ENCODE measurements at regions of chr4 and their contacts with region 1.

Region 1: DNA sequence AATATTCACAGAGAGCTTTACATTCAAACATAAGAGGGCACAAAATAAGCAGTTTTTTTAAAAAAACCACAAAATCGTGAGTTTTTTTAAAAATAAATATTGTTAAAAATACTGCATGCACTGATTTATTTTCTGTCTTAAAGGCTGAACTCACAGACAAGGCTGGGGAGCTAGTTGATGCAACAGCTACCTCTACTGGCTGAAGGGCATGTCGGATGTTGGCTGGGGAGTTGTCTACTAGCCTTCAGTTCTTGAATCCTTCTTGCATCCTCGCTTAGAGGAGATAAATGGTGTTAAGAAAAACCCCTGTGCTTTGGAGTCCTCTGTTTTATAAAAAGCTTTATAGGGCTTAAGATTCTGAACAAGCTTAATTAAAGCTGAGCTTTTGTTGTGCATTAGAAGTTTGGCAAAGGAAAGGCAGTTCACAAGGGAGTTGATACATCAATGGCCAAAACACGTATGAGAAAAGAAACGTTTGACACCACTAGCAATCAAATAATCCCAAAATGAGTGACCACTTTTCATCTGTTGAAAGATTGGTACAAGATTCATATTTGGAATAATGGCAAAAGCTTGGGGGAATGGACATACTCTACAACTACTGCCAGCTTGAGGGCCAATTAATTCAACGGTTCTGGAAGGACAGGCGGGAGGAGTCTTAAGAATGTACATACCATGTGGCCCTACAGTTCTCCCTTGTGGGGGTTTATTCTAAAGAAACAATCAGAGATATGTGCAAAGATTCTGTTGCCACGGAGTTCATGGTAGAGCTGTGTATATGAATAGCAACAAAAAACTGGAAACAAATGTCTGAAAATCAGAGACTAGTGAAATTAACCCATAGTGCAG is 94.7 kb downstream of the SEL1L3 start:
- DNase-seq: no peak
- H3K4me3 ChIP-seq: no peak overlapping the region
- CTCF ChIP-seq: peak; percentile 93

Region 2: DNA sequence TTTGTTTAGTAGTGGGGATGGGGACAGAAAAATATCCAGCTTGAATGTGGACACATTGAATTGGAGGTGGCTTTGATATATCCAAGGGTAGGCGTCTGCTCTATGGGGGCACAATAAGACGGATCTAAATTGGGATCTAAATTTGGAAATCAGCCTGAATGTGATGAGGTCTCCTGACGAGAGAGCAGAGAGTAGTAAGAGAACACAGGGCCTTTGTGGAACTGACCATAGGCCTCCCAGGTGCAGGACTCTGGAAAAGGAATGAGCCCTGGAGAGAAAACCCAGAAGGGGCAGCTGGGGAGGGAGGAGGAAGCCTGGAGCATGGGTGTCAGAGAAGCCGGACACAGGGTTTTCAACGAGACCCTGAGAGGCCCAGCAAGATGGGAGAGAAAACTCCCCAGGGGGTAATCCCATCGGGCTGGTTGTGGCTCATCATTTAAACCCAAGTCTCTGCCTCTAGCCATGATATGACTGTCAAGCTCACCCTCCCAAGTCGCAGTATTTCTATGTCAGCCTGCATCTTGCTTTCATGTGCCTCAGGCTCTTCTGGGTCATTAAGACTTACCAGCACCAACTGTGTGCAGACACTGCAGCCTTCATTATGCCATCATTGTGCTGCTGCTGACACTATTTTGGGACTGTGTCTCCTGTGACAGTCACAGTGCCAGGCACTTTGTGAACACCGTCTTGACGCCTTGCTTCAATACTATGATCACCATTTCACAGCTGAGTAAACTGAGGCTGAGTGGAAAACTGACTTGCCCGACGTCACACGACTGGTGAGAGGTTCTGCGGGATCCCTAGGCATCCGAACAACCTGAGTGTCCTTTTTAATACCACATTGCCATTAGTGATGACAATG is 333.9 kb before region 1 on chr4:
- CTCF ChIA-PET with region 1: interaction called, 464 read pairs
- POLR2A ChIA-PET with region 1: no interaction called
- DNase-seq: no peak
- H3K4me3 ChIP-seq: no peak overlapping the region
- CTCF ChIP-seq: no peak

Region 3: DNA sequence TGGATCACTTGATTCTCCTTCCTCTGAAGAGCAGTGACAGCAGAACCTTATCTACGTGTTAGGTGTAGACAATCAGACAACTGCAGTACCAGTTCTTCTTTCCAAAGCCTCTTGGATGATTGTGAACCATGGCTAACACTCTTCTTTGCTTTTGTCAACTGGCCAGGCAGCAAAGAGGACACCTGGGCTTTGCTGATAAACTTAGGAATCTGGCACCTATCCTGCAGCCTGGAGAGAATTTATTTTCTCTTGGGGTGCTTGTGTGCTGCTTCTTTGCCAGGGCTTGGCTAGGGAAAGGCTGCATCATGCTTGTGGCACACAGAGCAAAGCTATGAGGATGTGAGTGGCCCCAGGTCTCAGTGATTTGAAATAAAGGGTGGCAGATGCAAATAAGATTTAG is 313.6 kb before region 1 on chr4:
- CTCF ChIA-PET with region 1: interaction called, 30 read pairs
- POLR2A ChIA-PET with region 1: no interaction called
- DNase-seq: no peak
- H3K4me3 ChIP-seq: no peak overlapping the region
- CTCF ChIP-seq: no peak

Region 4: GRCh38 chr4:25756503-25756902 is 11.6 kb before region 1 on chr4:
- CTCF ChIA-PET with region 1: interaction called, 27 read pairs
- POLR2A ChIA-PET with region 1: no interaction called
- DNase-seq: no peak
- H3K4me3 ChIP-seq: no peak overlapping the region
- CTCF ChIP-seq: no peak

Region 5: GRCh38 chr4:25792200-25792791 is 24.2 kb after region 1 on chr4:
- CTCF ChIA-PET with region 1: interaction called, 38 read pairs
- POLR2A ChIA-PET with region 1: interaction called, 3 read pairs
- DNase-seq: no peak
- H3K4me3 ChIP-seq: no peak overlapping the region
- CTCF ChIP-seq: peak; percentile 42